PC-3 (cell line): ENCODE measurements at regions of chr9 and their contacts with region 1.

Region 1: GRCh38 chr9:88303721-88304451 is 84.4 kb upstream of the SPIN1 start:
- DNase-seq: peak; percentile 25
- ATAC-seq: no peak
- H3K4me3 ChIP-seq: no peak overlapping the region
- H3K27ac ChIP-seq: no peak overlapping the region
- H3K4me1 ChIP-seq: no peaks in the 10 kb centered on the region
- H3K27me3 ChIP-seq: no peaks in the 10 kb centered on the region
- CTCF ChIP-seq: no peak

Region 2: DNA sequence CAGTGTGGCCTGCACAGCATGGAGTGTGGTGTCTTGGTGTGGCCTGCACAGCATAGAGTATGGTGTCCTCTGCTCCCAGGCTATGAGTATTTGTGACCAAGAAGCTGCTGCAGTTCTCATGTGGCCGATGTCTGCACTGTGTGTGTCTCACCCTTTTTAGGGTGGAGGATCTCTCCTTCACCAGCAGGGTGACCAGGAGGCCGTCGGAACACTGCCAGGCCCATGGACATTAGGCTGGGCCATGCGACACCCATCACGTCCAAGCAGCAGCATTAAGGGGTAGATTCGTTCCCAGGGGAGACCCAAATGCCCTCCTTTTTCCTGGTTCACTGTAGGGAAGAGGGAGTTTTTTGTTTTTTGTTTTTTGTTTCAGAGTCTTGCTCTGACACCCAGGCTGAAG is 30.9 kb before region 1 on chr9:
- CTCF ChIA-PET with region 1: no interaction called
- POLR2A ChIA-PET with region 1: interaction called, 23 read pairs
- intact Hi-C with region 1: no loop called
- DNase-seq: no peak
- ATAC-seq: no peak
- H3K4me3 ChIP-seq: no peak overlapping the region
- H3K27ac ChIP-seq: no peak overlapping the region
- H3K4me1 ChIP-seq: peaks cover 22% of the 10 kb centered on the region
- H3K27me3 ChIP-seq: no peaks in the 10 kb centered on the region
- CTCF ChIP-seq: no peak

Region 3: GRCh38 chr9:88502552-88503034 is 198.7 kb after region 1 on chr9:
- CTCF ChIA-PET with region 1: no interaction called
- POLR2A ChIA-PET with region 1: interaction called, 11 read pairs
- intact Hi-C with region 1: no loop called
- DNase-seq: no peak
- ATAC-seq: no peak
- H3K4me3 ChIP-seq: no peak overlapping the region
- H3K27ac ChIP-seq: no peak overlapping the region
- H3K4me1 ChIP-seq: no peaks in the 10 kb centered on the region
- H3K27me3 ChIP-seq: no peaks in the 10 kb centered on the region
- CTCF ChIP-seq: no peak